Heart right ventricle (tissue), 16 donors: ENCODE measurements at regions of chr18 and their contacts with region 1.

Region 1: DNA sequence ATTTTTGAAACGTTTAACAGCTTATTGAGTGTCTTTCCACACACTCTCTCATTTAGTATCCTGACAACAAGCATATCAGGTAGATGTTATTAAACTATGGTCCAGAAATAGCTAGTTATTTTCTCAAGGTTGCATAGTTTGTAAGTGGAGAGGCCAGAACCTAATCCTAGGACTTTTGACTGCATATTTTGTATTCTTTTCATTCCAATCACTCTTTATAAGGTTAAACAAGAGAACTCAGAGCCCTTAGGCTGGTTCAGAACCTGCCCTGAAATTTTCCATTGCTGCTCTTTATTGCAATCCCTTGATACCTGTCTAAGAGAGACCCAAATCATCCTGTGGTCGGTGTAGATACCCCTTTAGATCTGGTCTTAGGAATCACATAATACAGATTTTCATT is 372.6 kb upstream of the TCF4 start:
- DNase-seq: no peak
- ATAC-seq: no peak
- H3K4me3 ChIP-seq: no peak overlapping the region
- H3K27ac ChIP-seq: no peak overlapping the region
- H3K4me1 ChIP-seq: no peaks in the 10 kb centered on the region
- H3K27me3 ChIP-seq: no peaks in the 10 kb centered on the region
- CTCF ChIP-seq: no peak

Region 2: GRCh38 chr18:55672574-55673361 is 287.8 kb before region 1 on chr18:
- intact Hi-C with region 1: no loop called
- DNase-seq: peak in 1 of 2 donors; percentile 4
- ATAC-seq: peak in 1 of 8 donors; percentile 51
- H3K4me3 ChIP-seq: peak overlapping the region in 3 of 10 donors; percentile 2 to 7 (median 5)
- H3K27ac ChIP-seq: no peak overlapping the region
- H3K4me1 ChIP-seq: peaks cover 0 to 16% (median 8%) of the 10 kb centered on the region in 9 donors
- H3K27me3 ChIP-seq: no peaks in the 10 kb centered on the region
- CTCF ChIP-seq: no peak

Region 3: DNA sequence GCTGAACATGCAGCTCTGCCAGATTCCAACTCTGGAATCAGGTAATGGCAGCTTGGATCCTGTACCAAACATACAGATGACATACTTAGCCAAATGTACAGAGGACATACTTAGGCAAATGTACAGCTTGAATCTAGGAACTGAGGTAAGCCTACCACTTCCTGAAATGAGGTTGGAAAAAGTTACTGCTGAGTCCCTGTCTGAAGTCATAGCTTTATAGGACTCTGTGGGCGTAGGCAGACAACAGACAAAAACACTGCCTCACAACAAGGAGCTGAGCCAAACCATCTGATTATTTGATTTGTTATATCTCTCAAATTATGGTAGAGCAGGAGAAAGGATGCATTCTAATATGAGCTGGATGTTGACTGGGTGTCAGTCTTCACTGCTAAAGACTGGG is 82.4 kb before region 1 on chr18:
- intact Hi-C with region 1: loop called in 1 of 10 experiments (anchors 2 kb)
- DNase-seq: no peak
- ATAC-seq: peak in 1 of 8 donors; percentile 60
- H3K4me3 ChIP-seq: no peak overlapping the region
- H3K27ac ChIP-seq: peak overlapping the region in 2 of 10 donors; percentile 25 to 31
- H3K4me1 ChIP-seq: peaks cover 0 to 25% (median 11%) of the 10 kb centered on the region in 9 donors
- H3K27me3 ChIP-seq: no peaks in the 10 kb centered on the region
- CTCF ChIP-seq: no peak

Region 4: GRCh38 chr18:55900380-55900779 is 60.2 kb before region 1 on chr18:
- intact Hi-C with region 1: no loop called
- DNase-seq: no peak
- ATAC-seq: no peak
- H3K4me3 ChIP-seq: no peak overlapping the region
- H3K27ac ChIP-seq: no peak overlapping the region
- H3K4me1 ChIP-seq: no peaks in the 10 kb centered on the region
- H3K27me3 ChIP-seq: no peaks in the 10 kb centered on the region
- CTCF ChIP-seq: no peak

Region 5: GRCh38 chr18:56009437-56009836 is 48.8 kb after region 1 on chr18:
- intact Hi-C with region 1: no loop called
- DNase-seq: no peak
- ATAC-seq: no peak
- H3K4me3 ChIP-seq: no peak overlapping the region
- H3K27ac ChIP-seq: no peak overlapping the region
- H3K4me1 ChIP-seq: no peaks in the 10 kb centered on the region
- H3K27me3 ChIP-seq: no peaks in the 10 kb centered on the region
- CTCF ChIP-seq: no peak

Region 6: DNA sequence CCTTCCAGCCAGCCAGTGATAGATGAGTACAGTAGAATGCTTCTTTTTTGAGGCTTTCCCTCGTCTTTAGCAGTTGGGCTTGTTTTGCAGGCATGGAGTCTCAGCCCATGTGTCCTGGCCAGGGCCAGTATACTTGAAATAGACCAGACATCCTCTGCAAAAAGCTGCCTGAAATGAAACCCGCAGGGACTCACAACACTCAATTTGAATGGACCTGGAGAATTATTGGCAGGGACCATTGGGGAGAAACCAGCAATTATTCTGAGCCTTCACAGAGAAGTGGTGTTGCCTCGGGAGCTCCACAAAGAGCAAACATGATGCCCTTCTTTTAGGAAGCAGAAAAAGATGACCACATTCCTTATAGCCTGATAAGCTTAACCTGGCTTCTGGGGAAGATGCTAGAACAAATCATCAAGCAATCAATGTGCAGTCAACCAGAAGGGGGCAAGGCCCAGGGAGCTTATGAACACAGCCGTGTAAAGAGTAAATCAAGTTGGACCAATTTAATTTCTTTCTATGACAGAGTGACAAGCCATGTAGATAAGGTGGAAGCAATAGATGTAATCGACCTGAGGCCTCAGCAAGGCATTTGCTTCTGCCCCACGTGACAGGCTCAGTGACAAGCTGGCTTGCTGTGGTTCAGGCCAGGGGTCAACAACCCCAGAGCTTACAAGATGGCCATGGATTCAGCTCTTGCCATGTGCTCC is 1228.4 kb after region 1 on chr18:
- intact Hi-C with region 1: no loop called
- DNase-seq: no peak
- ATAC-seq: no peak
- H3K4me3 ChIP-seq: no peak overlapping the region
- H3K27ac ChIP-seq: no peak overlapping the region
- H3K4me1 ChIP-seq: no peaks in the 10 kb centered on the region
- H3K27me3 ChIP-seq: peaks cover 0 to 14% (median 0%) of the 10 kb centered on the region in 7 donors
- CTCF ChIP-seq: no peak